ENCODE measurements at regions of chr5 and their contacts with region 1.

Region 1: GRCh38 chr5:72018146-72018803 is 89.0 kb upstream of the MAP1B start:
- DNase-seq: peak in 1 of 2 donors; percentile 59
- ATAC-seq: peak; percentile 56
- H3K4me3 ChIP-seq: no peak overlapping the region
- H3K27ac ChIP-seq: no peak overlapping the region
- H3K4me1 ChIP-seq: no peaks in the 10 kb centered on the region
- H3K27me3 ChIP-seq: no peaks in the 10 kb centered on the region

Region 2: DNA sequence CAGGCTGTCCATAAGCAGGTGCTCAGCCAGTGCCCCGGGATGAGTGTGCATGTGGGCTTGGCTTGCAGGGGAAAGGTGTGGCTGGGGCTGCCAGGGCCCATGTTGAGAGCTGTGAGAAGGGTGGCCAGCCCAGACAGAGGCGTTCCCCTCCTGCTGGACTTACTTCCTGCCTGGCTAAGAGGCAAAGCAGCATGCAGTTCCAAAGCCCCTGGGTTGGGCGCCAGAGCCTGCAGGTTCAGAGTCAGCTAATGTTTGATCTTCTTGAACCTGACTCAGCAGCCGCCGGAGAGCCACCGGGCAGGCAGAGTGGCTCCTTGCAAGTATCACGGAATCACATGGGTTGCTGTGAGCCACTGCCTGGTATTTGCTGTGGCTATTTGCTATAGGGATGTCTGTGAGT is 79.4 kb before region 1 on chr5:
- intact Hi-C with region 1: loop called in 1 of 2 experiments (anchors 5 kb)
- DNase-seq: no peak
- ATAC-seq: no peak
- H3K4me3 ChIP-seq: no peak overlapping the region
- H3K27ac ChIP-seq: no peak overlapping the region
- H3K4me1 ChIP-seq: no peaks in the 10 kb centered on the region
- H3K27me3 ChIP-seq: no peaks in the 10 kb centered on the region

Region 3: DNA sequence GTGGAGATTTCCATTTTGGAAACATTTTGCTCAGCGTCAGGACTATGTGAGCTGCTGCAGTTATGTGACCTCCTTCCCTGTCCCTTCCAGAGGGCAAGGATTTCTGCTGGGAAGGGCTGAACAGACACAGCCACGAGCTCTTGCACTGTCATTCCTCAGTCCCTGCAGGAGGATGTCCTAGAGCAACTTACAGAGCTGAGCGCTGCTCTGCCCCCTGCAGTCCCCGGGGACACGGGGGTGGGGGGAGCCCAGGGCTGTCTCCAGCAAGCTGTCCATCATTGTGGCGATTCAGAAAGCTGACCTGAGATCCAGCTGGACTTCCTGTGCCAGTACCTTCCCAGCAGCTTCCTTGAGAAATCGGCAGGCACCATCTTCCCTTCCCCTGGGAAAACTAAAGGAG is 61.0 kb after region 1 on chr5:
- intact Hi-C with region 1: no loop called
- DNase-seq: no peak
- ATAC-seq: no peak
- H3K4me3 ChIP-seq: no peak overlapping the region
- H3K27ac ChIP-seq: no peak overlapping the region
- H3K4me1 ChIP-seq: peaks cover 0 to 4% of the 10 kb centered on the region in 2 donors
- H3K27me3 ChIP-seq: no peaks in the 10 kb centered on the region

Region 4: DNA sequence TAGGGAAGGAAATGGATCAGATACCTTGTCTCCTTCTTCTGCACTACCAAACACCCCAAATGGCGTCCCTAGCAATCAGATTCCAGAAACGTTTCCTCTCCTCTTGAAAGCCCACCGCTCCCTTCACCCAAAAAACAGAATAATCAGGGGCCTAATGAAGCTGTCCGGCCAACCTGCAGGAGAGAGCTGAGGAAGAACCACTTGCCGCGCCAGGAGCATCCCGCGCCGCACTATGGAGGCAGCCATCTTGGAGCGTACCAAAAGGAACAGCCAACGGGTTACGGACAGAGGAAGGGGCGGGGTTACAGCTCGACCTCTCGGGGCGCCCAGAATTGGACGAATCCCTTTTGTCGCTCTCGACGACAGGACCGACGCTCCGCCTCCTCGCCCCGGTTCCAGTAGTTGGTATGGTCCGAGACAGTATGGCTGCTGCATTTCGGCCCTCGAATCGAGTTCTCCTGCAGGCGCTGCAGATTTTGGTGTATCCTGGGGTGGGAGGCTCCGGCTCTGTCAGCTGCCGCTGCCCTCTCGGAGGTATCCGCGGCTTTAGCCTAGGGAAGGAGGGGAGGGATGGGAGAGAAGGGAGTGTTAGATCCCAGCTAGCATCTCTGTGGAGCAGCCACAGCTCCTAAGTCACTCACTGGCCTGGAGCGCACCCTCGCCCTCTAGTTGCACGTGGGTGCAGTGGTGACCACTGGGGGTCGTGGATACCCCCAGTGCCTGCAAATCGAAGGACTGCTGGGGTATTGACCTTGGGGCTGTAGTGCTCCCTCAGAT is 301.9 kb after region 1 on chr5 and contains the starts of genes MRPS27 and PTCD2:
- intact Hi-C with region 1: loop called in 1 of 2 experiments (anchors 10 kb)
- DNase-seq: peak; percentile 97 to 98
- ATAC-seq: peak; percentile 99
- H3K4me3 ChIP-seq: peak within 1 kb of the TSS; percentile 71 to 84
- H3K27ac ChIP-seq: peak within 1 kb of the TSS in 1 of 2 donors; percentile 22
- H3K4me1 ChIP-seq: peaks cover 0 to 3% of the 10 kb centered on the region in 2 donors
- H3K27me3 ChIP-seq: no peaks in the 10 kb centered on the region
- total RNA-seq, gene MRPS27: 37.0 to 42.1 TPM
- total RNA-seq, gene PTCD2: 4.2 to 9.3 TPM

Measured in aorta (tissue), 5 donors.